Activated CD4-positive, alpha-beta memory T cell treated with anti-CD3 and anti-CD28 coated beads for 36 hours (primary cell): ENCODE measurements at regions of chr7 and their contacts with region 1.

Region 1: GRCh38 chr7:100837099-100837836 is 9.9 kb upstream of the EPHB4 start:
- DNase-seq: peak; percentile 84
- H3K4me3 Mint-ChIP-seq: peak overlapping the region; percentile 73
- H3K27ac Mint-ChIP-seq: peak overlapping the region; percentile 38
- H3K4me1 Mint-ChIP-seq: peaks cover 10% of the 10 kb centered on the region
- H3K27me3 Mint-ChIP-seq: no peaks in the 10 kb centered on the region

Region 2: DNA sequence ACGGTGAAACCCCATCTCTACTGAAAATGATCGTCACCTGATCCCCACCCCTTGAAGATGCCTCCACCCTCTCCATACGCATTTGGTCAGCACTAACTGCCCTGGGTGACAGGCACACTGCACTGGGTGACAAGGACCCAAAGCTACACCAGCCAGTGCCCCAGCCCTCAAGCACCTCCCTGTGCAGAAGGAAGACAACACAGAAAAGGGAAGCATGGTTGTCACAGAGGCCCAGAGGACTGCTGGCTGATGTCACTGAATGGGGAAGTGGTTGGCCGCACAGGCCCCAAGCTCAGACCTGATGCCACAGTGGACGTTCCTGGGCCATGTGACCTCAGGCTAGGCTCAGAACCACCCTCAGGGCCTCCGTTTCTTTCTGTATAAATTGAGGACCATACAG is 468.2 kb before region 1 on chr7:
- CTCF ChIA-PET with region 1: no interaction called
- POLR2A ChIA-PET with region 1: no interaction called
- intact Hi-C with region 1: no loop called
- DNase-seq: no peak
- H3K4me3 Mint-ChIP-seq: no peak overlapping the region
- H3K27ac Mint-ChIP-seq: no peak overlapping the region
- H3K4me1 Mint-ChIP-seq: peaks cover 37% of the 10 kb centered on the region
- H3K27me3 Mint-ChIP-seq: no peaks in the 10 kb centered on the region

Region 3: GRCh38 chr7:100803398-100804233 is 33.7 kb before region 1 on chr7:
- CTCF ChIA-PET with region 1: interaction called, 6 read pairs
- POLR2A ChIA-PET with region 1: no interaction called
- intact Hi-C with region 1: loop called (anchors 5 kb)
- DNase-seq: peak; percentile 67
- H3K4me3 Mint-ChIP-seq: no peak overlapping the region
- H3K27ac Mint-ChIP-seq: no peak overlapping the region
- H3K4me1 Mint-ChIP-seq: peaks cover 2% of the 10 kb centered on the region
- H3K27me3 Mint-ChIP-seq: peaks cover 3% of the 10 kb centered on the region

Region 4: DNA sequence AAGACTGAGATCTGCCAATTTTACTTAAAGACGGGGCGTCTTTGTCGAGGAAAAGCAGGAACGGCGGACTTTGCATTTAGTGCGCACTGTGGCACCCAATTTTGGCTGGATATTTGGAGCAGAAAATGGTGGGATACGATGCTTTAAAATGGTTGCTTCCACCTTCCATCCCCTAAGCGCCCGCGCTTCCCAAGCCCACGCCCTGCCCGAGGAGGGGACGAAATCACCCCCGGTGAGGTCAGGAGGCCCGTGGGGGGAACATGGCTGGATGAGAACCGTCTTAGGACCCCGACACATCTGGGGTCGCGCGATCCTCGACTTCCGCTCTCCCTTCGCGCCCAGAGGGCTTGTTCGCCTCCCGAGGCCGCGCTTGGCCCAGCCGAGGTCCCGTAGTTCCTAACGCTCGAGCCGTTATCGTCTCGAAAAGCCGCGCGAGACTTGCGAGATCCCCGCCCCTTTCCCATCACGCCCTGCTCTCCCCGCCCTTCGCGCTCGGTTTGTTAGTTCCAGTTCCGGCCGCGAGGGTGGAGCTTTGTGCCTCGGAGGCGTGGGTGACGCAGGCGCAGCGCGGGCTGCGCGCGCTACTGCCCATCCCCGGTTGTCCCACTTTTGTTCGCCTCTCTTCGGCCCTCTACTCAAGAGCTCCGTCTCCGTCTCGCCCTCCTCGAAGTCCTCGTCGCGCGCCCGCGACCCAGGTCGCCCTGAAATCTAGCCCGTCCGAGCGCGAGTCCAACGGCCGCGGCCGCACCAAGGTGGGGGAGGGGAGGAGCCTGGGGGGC is 37.5 kb after region 1 on chr7 and contains the start of gene SRRT:
- CTCF ChIA-PET with region 1: no interaction called
- POLR2A ChIA-PET with region 1: no interaction called
- intact Hi-C with region 1: loop called (anchors 2 kb)
- DNase-seq: peak; percentile 99
- H3K4me3 Mint-ChIP-seq: peak within 1 kb of the TSS; percentile 99
- H3K27ac Mint-ChIP-seq: peak within 1 kb of the TSS; percentile 100
- H3K4me1 Mint-ChIP-seq: peaks cover 43% of the 10 kb centered on the region
- H3K27me3 Mint-ChIP-seq: no peaks in the 10 kb centered on the region
- total RNA-seq, gene SRRT: 209 to 223 TPM